Mammary epithelial cell (primary cell): ENCODE measurements at regions of chr12 and their contacts with region 1.

Region 1: DNA sequence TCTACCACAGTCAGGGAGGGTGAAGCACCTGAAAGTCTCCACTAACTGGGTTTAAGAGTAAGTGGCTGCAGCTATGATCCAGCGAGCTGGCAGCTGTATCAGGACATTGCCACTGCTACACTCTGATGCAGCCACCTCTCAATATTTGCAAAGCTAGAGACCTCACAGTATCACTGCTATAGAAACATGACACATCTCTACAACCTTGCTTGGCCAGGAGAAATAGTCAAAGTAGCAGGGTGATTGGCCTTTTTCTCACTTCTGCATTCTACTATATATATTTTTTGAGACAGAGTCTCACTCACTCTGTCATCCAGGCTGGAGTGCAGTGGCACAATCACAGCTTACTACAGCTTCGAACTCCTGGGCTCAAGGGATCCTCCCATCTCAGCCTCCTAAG is 9.3 kb upstream of the FMNL3 start:
- DNase-seq: no peak
- H3K4me3 ChIP-seq: no peak overlapping the region
- H3K27ac ChIP-seq: no peak overlapping the region
- H3K4me1 ChIP-seq: no peaks in the 10 kb centered on the region
- H3K27me3 ChIP-seq: no peaks in the 10 kb centered on the region
- CTCF ChIP-seq: no peak

Region 2: GRCh38 chr12:49623142-49623904 is 93.2 kb before region 1 on chr12 and contains the start of gene PRPF40B:
- CTCF ChIA-PET with region 1: no interaction called
- dilution Hi-C with region 1: loop called (anchors 10 kb)
- in situ Hi-C with region 1: no loop called
- intact Hi-C with region 1: no loop called
- DNase-seq: peak; percentile 79
- H3K4me3 ChIP-seq: peak within 1 kb of the TSS; percentile 57 to 74 (median 58)
- H3K27ac ChIP-seq: peak within 1 kb of the TSS; percentile 72
- H3K4me1 ChIP-seq: peaks cover 68% of the 10 kb centered on the region
- H3K27me3 ChIP-seq: no peaks in the 10 kb centered on the region
- CTCF ChIP-seq: peak in 1 of 2 donors; percentile 49
- total RNA-seq, gene PRPF40B: 8.0 to 34.4 TPM